HEK293T (cell line): ENCODE measurements at regions of chr1 and their contacts with region 1.

Region 1: GRCh38 chr1:23484253-23485001 is 448 bp upstream of the ASAP3 start:
- DNase-seq: peak; percentile 96

Region 2: DNA sequence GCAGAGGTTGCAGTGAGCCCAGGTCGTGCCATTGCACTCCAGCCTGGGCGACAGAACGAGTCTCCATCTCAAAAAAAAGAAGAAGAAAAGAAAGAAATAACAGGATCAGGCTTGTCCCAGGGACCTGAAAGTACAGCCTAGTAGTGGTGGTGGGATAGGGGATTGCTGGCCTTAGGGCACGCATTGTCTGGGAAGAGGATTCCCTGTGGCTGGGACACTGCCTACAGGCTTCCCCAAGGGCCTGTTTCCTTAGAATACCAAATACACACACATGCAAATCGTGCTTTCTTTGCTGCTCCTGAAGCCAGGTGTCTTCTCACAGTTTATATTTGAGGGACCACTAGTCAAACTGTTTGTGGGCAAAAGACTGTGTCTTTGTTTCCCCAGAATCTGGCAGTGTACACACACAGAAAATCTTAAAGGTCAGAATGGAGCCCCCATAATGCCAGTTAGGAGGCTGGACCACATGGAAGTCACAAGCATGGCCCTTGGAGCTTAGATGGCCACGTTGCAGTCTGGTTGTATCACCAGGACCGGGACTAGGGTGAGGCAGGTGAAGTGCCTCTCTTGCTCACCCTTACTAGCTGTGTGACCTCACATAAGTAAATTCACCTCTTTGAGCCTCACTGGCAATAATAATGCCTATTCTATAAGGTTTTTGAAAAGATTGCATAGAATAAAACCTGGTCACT is 12.2 kb after region 1 on chr1:
- CTCF ChIA-PET with region 1: interaction called, 40 read pairs
- POLR2A ChIA-PET with region 1: interaction called, 9 read pairs
- DNase-seq: no peak